B cell (primary cell): ENCODE measurements at regions of chr3 and their contacts with region 1.

Region 1: DNA sequence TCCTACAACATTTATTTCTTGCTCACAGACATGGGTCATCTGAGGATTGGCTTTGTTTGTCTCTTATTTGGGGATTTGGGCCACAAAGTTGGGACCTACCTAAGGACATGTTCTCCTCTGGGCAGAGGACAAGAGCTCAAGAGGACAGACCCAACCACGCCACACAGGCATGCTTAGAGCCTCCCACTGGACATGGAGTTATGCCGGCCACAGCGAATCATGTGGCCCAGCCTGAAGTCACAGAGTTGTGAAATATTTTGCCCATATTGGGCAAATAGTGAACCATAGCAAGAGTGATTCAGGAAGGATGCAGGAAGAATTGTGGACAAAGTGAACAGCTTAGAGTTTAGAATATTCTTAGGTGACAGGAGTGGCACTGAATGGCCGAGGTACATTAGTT is 9.9 kb downstream of the TRAK1 start:
- DNase-seq: no peak
- ATAC-seq: no peak
- H3K4me3 ChIP-seq: no peak overlapping the region
- H3K4me3 Mint-ChIP-seq: no peak overlapping the region
- H3K27ac ChIP-seq: no peak overlapping the region
- H3K27ac Mint-ChIP-seq: no peak overlapping the region
- H3K4me1 ChIP-seq: peaks cover 4 to 23% of the 10 kb centered on the region in 2 donors
- H3K4me1 Mint-ChIP-seq: peaks cover 41% of the 10 kb centered on the region
- H3K27me3 ChIP-seq: no peaks in the 10 kb centered on the region
- H3K27me3 Mint-ChIP-seq: no peaks in the 10 kb centered on the region
- CTCF ChIP-seq: no peak

Region 2: DNA sequence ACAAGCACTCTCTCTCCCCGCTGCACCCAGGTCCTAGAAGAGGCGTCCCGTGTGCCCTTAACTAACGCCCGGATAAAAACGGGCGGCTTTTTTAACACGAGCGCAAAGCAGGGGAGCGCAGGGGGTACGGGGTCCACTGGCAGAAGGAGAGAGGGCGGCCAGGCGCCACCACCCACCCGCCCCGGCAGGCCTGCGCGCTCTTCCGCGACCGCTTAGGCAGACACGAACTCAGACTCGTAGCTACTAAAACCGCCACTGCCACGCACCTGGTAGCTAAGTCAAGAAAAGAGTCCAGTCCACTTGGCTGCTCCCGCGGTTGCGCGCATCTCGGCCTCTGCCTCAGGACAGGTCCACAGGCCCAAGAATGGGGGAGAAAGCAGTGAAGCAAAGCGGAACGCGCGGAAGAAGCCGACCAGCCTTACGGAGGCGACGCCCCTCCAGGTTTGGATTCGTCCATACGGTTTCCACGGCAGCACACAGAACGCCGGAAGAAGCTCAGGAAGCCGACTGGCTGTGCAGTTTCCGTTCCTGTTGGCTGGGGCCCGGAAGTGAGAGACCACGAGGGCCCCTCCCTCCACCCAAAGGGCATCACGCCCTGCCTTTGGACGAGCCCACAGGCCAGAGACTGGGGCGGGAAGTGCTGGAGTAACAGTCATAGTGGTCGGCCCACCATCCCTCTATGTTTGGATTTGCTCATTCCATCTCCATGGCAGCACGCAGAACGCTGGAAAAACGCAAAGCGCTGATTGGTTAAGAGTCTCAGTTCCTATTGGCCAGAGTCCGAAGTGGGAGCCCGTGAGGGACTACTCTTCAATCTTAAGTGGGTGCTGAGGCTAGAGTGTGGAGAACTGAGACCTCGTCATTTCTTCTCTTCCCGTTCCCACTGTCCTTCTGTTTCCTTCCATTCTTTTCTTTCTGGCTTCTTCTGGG is 139.0 kb before region 1 on chr3 and contains the start of gene ULK4:
- CTCF ChIA-PET with region 1: interaction called, 31 read pairs
- POLR2A ChIA-PET with region 1: interaction called, 3 read pairs
- intact Hi-C with region 1: loop called (anchors 1 kb)
- DNase-seq: peak; percentile 99
- ATAC-seq: peak; percentile 87
- H3K4me3 ChIP-seq: peak within 1 kb of the TSS; percentile 75 to 92 (median 88)
- H3K4me3 Mint-ChIP-seq: peak within 1 kb of the TSS; percentile 98
- H3K27ac ChIP-seq: peak within 1 kb of the TSS; percentile 90 to 99
- H3K27ac Mint-ChIP-seq: peak within 1 kb of the TSS; percentile 99
- H3K4me1 ChIP-seq: peaks cover 10 to 16% of the 10 kb centered on the region in 2 donors
- H3K4me1 Mint-ChIP-seq: peaks cover 19% of the 10 kb centered on the region
- H3K27me3 ChIP-seq: no peaks in the 10 kb centered on the region
- H3K27me3 Mint-ChIP-seq: no peaks in the 10 kb centered on the region
- CTCF ChIP-seq: no peak
- total RNA-seq, gene ULK4: 27.2 and 33.7 TPM in 2 replicates

Region 3: GRCh38 chr3:42025370-42026138 is 75.5 kb before region 1 on chr3:
- CTCF ChIA-PET with region 1: interaction called, 14 read pairs
- POLR2A ChIA-PET with region 1: no interaction called
- intact Hi-C with region 1: no loop called
- DNase-seq: peak; percentile 65
- ATAC-seq: peak; percentile 62
- H3K4me3 ChIP-seq: peak overlapping the region in 2 of 5 experiments; percentile 14 to 18
- H3K4me3 Mint-ChIP-seq: peak overlapping the region; percentile 68
- H3K27ac ChIP-seq: peak overlapping the region; percentile 59 to 81
- H3K27ac Mint-ChIP-seq: peak overlapping the region; percentile 69
- H3K4me1 ChIP-seq: peaks cover 56 to 70% of the 10 kb centered on the region in 2 donors
- H3K4me1 Mint-ChIP-seq: peaks cover 76% of the 10 kb centered on the region
- H3K27me3 ChIP-seq: no peaks in the 10 kb centered on the region
- H3K27me3 Mint-ChIP-seq: no peaks in the 10 kb centered on the region
- CTCF ChIP-seq: no peak

Region 4: GRCh38 chr3:42061713-42062408 is 39.2 kb before region 1 on chr3:
- CTCF ChIA-PET with region 1: interaction called, 69 read pairs
- POLR2A ChIA-PET with region 1: interaction called, 3 read pairs
- intact Hi-C with region 1: loop called (anchors 2 kb)
- DNase-seq: no peak
- ATAC-seq: no peak
- H3K4me3 ChIP-seq: no peak overlapping the region
- H3K4me3 Mint-ChIP-seq: peak overlapping the region; percentile 59
- H3K27ac ChIP-seq: peak overlapping the region; percentile 51 to 100
- H3K27ac Mint-ChIP-seq: peak overlapping the region; percentile 77
- H3K4me1 ChIP-seq: peaks cover 92 to 95% of the 10 kb centered on the region in 2 donors
- H3K4me1 Mint-ChIP-seq: peaks cover 85% of the 10 kb centered on the region
- H3K27me3 ChIP-seq: no peaks in the 10 kb centered on the region
- H3K27me3 Mint-ChIP-seq: no peaks in the 10 kb centered on the region
- CTCF ChIP-seq: no peak

Region 5: GRCh38 chr3:42118762-42119361 is 17.8 kb after region 1 on chr3:
- CTCF ChIA-PET with region 1: interaction called, 21 read pairs
- POLR2A ChIA-PET with region 1: interaction called, 3 read pairs
- intact Hi-C with region 1: no loop called
- DNase-seq: peak; percentile 46
- ATAC-seq: no peak
- H3K4me3 ChIP-seq: no peak overlapping the region
- H3K4me3 Mint-ChIP-seq: no peak overlapping the region
- H3K27ac ChIP-seq: peak overlapping the region in 1 of 2 donors; percentile 47
- H3K27ac Mint-ChIP-seq: peak overlapping the region; percentile 59
- H3K4me1 ChIP-seq: peaks cover 51 to 63% of the 10 kb centered on the region in 2 donors
- H3K4me1 Mint-ChIP-seq: peaks cover 86% of the 10 kb centered on the region
- H3K27me3 ChIP-seq: no peaks in the 10 kb centered on the region
- H3K27me3 Mint-ChIP-seq: no peaks in the 10 kb centered on the region
- CTCF ChIP-seq: no peak